ENCODE measurements at regions of chr10 and their contacts with region 1.

Region 1: DNA sequence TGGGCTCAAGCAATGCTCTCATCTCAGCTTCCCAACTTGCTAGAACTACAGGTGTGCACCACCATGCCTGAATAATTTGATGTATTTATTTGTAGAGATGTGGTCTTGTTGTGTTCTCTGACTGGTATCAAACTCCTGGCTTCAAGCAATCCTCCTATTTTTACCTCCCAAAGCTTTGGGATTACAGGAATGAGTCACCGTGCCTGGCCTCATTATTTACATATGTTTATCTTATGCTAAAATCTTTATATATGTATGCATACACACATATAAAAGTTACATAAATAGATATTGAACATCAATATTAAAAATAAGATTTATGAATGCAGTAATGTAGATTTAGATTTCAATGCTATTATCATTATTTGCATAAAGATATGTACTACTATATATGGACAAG is 1634.5 kb upstream of the LRRTM3 start:
- DNase-seq: peak; percentile 87
- ATAC-seq: peak; percentile 84
- H3K4me3 ChIP-seq: no peak overlapping the region
- H3K27ac ChIP-seq: no peak overlapping the region
- H3K4me1 ChIP-seq: peaks cover 13% of the 10 kb centered on the region
- H3K27me3 ChIP-seq: no peaks in the 10 kb centered on the region
- CTCF ChIP-seq: no peak

Region 2: DNA sequence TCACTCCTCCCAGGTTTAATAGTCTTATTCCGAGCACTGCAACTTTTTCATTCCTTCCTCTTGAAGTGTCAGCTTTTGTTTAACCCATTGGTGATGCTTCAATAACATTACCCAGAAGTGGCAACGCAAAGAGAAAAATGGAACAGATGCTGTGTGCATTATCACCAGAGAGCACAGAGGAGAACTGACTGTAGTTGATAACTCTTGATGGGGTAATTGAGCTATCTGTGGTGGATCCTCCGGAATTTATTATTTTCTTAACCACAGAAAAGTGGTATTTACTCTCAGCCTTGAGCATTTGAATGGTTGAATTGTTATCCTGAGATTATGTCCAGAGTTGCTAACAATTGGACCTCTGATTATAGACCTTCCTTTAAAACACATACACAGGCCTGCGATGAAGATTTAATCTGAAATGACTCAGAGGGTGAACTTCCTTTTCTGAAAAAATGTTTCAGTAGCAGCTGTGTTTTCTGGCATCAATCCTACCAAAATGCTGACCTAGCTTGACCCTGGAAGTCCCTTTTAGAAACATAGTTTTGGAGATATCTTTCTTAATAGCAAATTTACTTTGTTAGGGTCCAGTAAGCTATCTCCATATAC is 50.1 kb after region 1 on chr10:
- CTCF ChIA-PET with region 1: no interaction called
- POLR2A ChIA-PET with region 1: no interaction called
- intact Hi-C with region 1: loop called (anchors 1 kb)
- DNase-seq: peak; percentile 90
- ATAC-seq: peak; percentile 90
- H3K4me3 ChIP-seq: no peak overlapping the region
- H3K27ac ChIP-seq: peak overlapping the region; percentile 29
- H3K4me1 ChIP-seq: peaks cover 27% of the 10 kb centered on the region
- H3K27me3 ChIP-seq: no peaks in the 10 kb centered on the region
- CTCF ChIP-seq: no peak

Measured in PC-3 (cell line).